Activated CD4-positive, alpha-beta T cell treated with anti-CD3 and anti-CD28 coated beads for 36 hours (primary cell): ENCODE measurements at regions of chr11 and their contacts with region 1.

Region 1: GRCh38 chr11:93340223-93340622 is 9.7 kb downstream of the DEUP1 start:
- DNase-seq: no peak
- ATAC-seq: no peak
- H3K4me3 Mint-ChIP-seq: no peak overlapping the region
- H3K27ac Mint-ChIP-seq: no peak overlapping the region
- H3K4me1 Mint-ChIP-seq: no peaks in the 10 kb centered on the region
- H3K27me3 Mint-ChIP-seq: peaks cover 7% of the 10 kb centered on the region

Region 2: DNA sequence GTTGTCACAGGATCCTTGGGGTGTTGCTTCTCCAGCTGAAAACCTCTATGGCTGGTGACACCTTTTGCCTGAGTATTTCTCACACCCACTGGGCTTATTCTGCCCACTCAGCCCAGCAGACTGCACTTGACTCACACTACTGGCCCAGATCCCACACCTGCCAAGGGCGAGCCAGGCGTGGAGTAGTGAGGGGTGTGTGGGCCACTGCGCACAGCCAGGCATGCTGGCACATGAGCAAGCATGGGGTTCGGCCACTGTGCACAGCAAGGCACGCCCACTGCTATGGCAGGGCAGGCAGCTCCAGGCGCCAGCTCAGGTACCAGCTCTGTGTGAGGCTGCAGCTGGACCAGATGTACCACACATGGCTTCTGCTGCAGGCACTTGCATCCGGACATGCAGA is 487.3 kb before region 1 on chr11:
- CTCF ChIA-PET with region 1: no interaction called
- POLR2A ChIA-PET with region 1: no interaction called
- intact Hi-C with region 1: no loop called
- DNase-seq: no peak
- ATAC-seq: no peak
- H3K4me3 Mint-ChIP-seq: no peak overlapping the region
- H3K27ac Mint-ChIP-seq: no peak overlapping the region
- H3K4me1 Mint-ChIP-seq: no peaks in the 10 kb centered on the region
- H3K27me3 Mint-ChIP-seq: peaks cover 2% of the 10 kb centered on the region

Region 3: GRCh38 chr11:93477684-93478234 is 137.5 kb after region 1 on chr11:
- CTCF ChIA-PET with region 1: no interaction called
- POLR2A ChIA-PET with region 1: no interaction called
- intact Hi-C with region 1: loop called in 1 of 2 experiments (anchors 1 kb)
- DNase-seq: no peak
- ATAC-seq: no peak
- H3K4me3 Mint-ChIP-seq: no peak overlapping the region
- H3K27ac Mint-ChIP-seq: no peak overlapping the region
- H3K4me1 Mint-ChIP-seq: no peaks in the 10 kb centered on the region
- H3K27me3 Mint-ChIP-seq: no peaks in the 10 kb centered on the region